GM12878 (cell line): ENCODE measurements at regions of chr11 and their contacts with region 1.

Region 1: DNA sequence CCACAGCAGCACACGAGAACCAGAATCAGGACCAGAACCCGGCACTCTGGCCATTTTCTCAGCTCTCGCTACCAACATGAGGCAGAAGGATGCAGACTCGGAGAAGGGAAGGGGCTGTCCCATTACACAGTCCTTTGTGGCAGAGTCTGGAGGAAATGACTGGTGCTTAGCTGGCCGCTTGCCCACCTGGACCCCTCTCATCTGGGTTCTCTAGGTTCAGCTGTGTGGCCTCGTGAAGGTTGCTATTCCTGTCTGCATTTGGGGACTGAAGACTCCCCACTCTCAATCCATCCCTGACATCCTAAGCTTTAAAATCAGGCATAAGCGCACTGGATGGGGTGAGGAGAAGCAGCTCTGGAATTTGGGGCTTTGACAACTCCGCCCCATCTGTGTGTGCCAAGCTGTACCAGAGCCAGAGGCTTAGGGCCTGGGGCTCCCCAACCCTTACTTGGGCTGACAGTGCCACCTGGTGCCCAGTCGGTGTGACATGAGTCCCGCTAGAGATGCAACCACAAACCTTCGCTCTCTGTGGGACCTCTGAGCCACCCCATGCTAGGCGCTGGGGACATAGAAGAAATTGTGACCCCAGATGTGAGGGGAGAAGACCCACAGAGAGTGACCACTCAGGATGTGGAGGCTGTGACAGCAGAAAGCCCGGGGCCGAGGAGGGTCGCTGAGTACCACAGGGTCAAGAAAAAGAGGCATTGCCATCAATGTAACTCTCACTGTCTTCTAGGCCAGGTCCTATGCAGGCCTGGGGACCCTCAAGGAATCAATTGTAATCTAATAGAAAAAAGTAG is 35.9 kb upstream of the FCHSD2 start:
- DNase-seq: peak; percentile 68
- ATAC-seq: peak; percentile 99
- H3K4me3 ChIP-seq: no peak overlapping the region
- H3K27ac ChIP-seq: peak overlapping the region; percentile 0
- H3K4me1 ChIP-seq: peaks cover 44% of the 10 kb centered on the region
- H3K27me3 ChIP-seq: no peaks in the 10 kb centered on the region
- CTCF ChIP-seq: peak; percentile 82 to 95 (median 91)
- EP300 ChIP-seq: no peak
- POLR2A ChIP-seq: no peak
- RAD21 ChIP-seq: peak; percentile 99

Region 2: GRCh38 chr11:72722050-72722748 is 455.8 kb before region 1 on chr11:
- CTCF ChIA-PET with region 1: interaction called, 31 read pairs
- POLR2A ChIA-PET with region 1: no interaction called
- RAD21 ChIA-PET with region 1: interaction called, 24 read pairs
- SMC1A ChIA-PET with region 1: interaction called, 35 read pairs
- in situ Hi-C with region 1: loop called (anchors 10 kb)
- intact Hi-C with region 1: loop called (anchors 5 kb)
- DNase-seq: no peak
- ATAC-seq: peak; percentile 93
- H3K4me3 ChIP-seq: peak overlapping the region; percentile 85
- H3K27ac ChIP-seq: peak overlapping the region; percentile 92
- H3K4me1 ChIP-seq: peaks cover 49% of the 10 kb centered on the region
- H3K27me3 ChIP-seq: no peaks in the 10 kb centered on the region
- CTCF ChIP-seq: no peak
- EP300 ChIP-seq: no peak
- POLR2A ChIP-seq: peak; percentile 72
- RAD21 ChIP-seq: no peak

Region 3: GRCh38 chr11:72840780-72841179 is 337.2 kb before region 1 on chr11:
- CTCF ChIA-PET with region 1: interaction called, 14 read pairs
- POLR2A ChIA-PET with region 1: no interaction called
- RAD21 ChIA-PET with region 1: interaction called, 6 read pairs
- SMC1A ChIA-PET with region 1: interaction called, 65 read pairs
- in situ Hi-C with region 1: loop called (anchors 25 kb)
- intact Hi-C with region 1: no loop called
- DNase-seq: no peak
- ATAC-seq: no peak
- H3K4me3 ChIP-seq: no peak overlapping the region
- H3K27ac ChIP-seq: no peak overlapping the region
- H3K4me1 ChIP-seq: no peaks in the 10 kb centered on the region
- H3K27me3 ChIP-seq: no peaks in the 10 kb centered on the region
- CTCF ChIP-seq: no peak
- EP300 ChIP-seq: no peak
- POLR2A ChIP-seq: no peak
- RAD21 ChIP-seq: no peak

Region 4: GRCh38 chr11:72918851-72919250 is 259.1 kb before region 1 on chr11:
- CTCF ChIA-PET with region 1: interaction called, 95 read pairs
- POLR2A ChIA-PET with region 1: interaction called, 3 read pairs
- RAD21 ChIA-PET with region 1: interaction called, 68 read pairs
- SMC1A ChIA-PET with region 1: interaction called, 32 read pairs
- in situ Hi-C with region 1: no loop called
- intact Hi-C with region 1: loop called (anchors 2 kb)
- DNase-seq: no peak
- ATAC-seq: no peak
- H3K4me3 ChIP-seq: no peak overlapping the region
- H3K27ac ChIP-seq: no peak overlapping the region
- H3K4me1 ChIP-seq: no peaks in the 10 kb centered on the region
- H3K27me3 ChIP-seq: no peaks in the 10 kb centered on the region
- CTCF ChIP-seq: no peak
- EP300 ChIP-seq: no peak
- POLR2A ChIP-seq: no peak
- RAD21 ChIP-seq: no peak

Region 5: GRCh38 chr11:73085189-73085875 is 92.6 kb before region 1 on chr11:
- CTCF ChIA-PET with region 1: interaction called, 4 read pairs
- POLR2A ChIA-PET with region 1: no interaction called
- RAD21 ChIA-PET with region 1: interaction called, 4 read pairs
- SMC1A ChIA-PET with region 1: interaction called, 10 read pairs
- in situ Hi-C with region 1: no loop called
- intact Hi-C with region 1: no loop called
- DNase-seq: no peak
- ATAC-seq: peak; percentile 54
- H3K4me3 ChIP-seq: no peak overlapping the region
- H3K27ac ChIP-seq: peak overlapping the region; percentile 4; the same call in 1 of the 2 replicates
- H3K4me1 ChIP-seq: peaks cover 27% of the 10 kb centered on the region
- H3K27me3 ChIP-seq: no peaks in the 10 kb centered on the region
- CTCF ChIP-seq: no peak
- EP300 ChIP-seq: no peak
- POLR2A ChIP-seq: no peak
- RAD21 ChIP-seq: no peak

Region 6: DNA sequence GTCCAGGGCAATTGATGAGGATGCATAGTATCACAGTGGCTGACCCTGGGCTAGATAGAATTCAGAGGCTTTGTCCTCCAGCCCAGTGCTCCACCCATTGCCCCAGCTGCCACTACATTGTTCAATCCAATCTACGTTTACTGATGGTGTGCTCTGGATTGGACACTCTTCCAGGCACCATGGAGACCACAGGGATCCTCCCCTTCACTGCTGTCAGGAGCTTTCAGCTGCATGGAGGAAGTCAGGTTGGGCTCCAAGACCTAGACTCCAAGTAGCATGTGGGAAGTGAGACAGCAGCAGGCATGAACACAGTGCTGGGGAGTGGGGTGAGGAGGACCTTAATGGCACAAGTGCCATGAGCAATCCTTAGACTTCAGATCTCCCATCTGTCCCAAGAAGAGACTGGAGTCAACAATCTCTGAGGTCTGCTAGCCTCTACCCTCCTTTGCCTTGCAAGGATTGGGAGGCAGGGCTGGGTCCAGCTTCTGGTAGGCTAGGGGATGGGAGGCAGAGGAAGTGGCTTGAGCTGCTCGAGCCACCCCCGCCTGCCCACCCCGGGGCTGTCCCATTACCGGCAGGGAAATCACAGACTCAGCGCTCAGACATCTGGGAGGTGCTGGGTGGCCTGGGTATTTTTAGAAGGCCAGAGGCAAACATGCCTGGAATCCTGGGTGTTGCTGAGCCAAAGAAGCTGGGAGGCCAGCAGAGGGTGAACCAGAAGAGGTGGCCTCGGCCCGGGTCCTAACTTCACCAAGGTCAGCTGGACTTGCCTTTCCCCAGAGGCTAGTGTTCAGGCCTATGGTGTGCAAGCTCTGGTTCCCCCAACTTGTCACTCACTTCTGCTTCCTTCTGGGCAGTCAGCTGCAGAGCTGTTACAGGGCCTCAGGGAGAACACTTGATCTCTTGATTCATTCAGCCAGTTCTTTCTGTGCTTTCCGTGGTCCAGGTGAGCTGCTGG is 20.6 kb before region 1 on chr11:
- CTCF ChIA-PET with region 1: interaction called, 86 read pairs
- POLR2A ChIA-PET with region 1: interaction called, 13 read pairs
- RAD21 ChIA-PET with region 1: interaction called, 120 read pairs
- SMC1A ChIA-PET with region 1: interaction called, 926 read pairs
- in situ Hi-C with region 1: no loop called
- intact Hi-C with region 1: no loop called
- DNase-seq: no peak
- ATAC-seq: peak; percentile 63
- H3K4me3 ChIP-seq: peak overlapping the region; percentile 69
- H3K27ac ChIP-seq: peak overlapping the region; percentile 98
- H3K4me1 ChIP-seq: peaks cover 71% of the 10 kb centered on the region
- H3K27me3 ChIP-seq: no peaks in the 10 kb centered on the region
- CTCF ChIP-seq: no peak
- EP300 ChIP-seq: peak in 1 of 2 experiments; percentile 59; a peak in 2 of 4 replicates
- POLR2A ChIP-seq: peak; percentile 67
- RAD21 ChIP-seq: no peak

Region 7: DNA sequence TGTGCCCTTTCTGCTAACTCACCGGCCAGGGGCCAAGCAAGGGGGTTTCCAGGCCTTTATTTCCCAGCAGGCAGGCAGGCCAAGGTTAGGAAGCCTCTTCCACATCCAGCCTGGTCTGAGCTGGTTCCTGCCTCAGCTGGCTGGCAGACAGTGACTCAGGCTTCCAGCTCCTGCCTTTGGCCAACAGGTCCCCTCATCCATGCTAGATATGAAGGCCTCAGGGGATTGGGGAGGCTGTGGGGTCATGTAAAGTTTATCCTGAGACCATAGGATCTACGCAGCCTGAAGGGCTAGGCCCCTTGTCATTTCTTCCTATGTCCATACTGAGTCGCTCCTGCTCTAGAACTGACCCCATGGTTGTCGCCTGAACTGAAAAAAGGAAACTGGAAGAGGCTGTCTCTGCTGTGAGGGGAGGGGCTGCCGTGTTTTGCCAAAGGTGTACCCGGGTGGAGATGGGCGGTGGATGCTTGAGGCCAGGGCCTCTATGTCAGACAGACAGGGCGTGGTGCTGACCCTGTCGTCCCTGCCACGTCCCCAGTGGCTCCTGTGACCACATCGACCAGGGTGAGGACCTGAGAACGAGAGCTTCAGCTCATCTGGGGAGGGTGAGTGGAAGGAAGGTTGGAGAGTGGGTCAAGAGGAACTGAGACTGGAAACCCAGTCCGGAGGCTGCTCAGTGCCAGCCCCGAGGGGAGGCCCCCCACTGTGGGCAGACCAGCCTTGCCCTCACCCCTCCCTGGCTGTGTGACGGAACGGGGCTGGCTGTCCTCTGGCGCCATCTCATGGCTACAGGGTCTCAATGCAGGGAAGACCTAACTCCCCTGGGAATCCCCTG is 111.1 kb after region 1 on chr11:
- CTCF ChIA-PET with region 1: interaction called, 116 read pairs
- POLR2A ChIA-PET with region 1: no interaction called
- RAD21 ChIA-PET with region 1: interaction called, 34 read pairs
- SMC1A ChIA-PET with region 1: interaction called, 9 read pairs
- in situ Hi-C with region 1: no loop called
- intact Hi-C with region 1: no loop called
- DNase-seq: peak; percentile 70
- ATAC-seq: peak; percentile 95
- H3K4me3 ChIP-seq: 0 out of 2 replicates have a peak overlapping the region, but pooled peaks have one; percentile 9
- H3K27ac ChIP-seq: peak overlapping the region; percentile 49
- H3K4me1 ChIP-seq: peaks cover 23% of the 10 kb centered on the region
- H3K27me3 ChIP-seq: no peaks in the 10 kb centered on the region; a peak in 2 of 4 replicates
- CTCF ChIP-seq: peak; percentile 92 to 99 (median 97)
- EP300 ChIP-seq: 0 out of 4 replicates have a peak, but pooled peaks of 1 of the 2 experiments have one; percentile 6
- POLR2A ChIP-seq: no peak
- RAD21 ChIP-seq: peak; percentile 94